ENCODE measurements at regions of chr7 and their contacts with region 1.

Region 1: GRCh38 chr7:129218514-129219062 is 6.2 kb upstream of the AHCYL2 start:
- DNase-seq: peak; percentile 85
- H3K4me3 Mint-ChIP-seq: no peak overlapping the region
- H3K27ac Mint-ChIP-seq: no peak overlapping the region
- H3K4me1 Mint-ChIP-seq: peaks cover 9% of the 10 kb centered on the region
- H3K27me3 Mint-ChIP-seq: peaks cover 3% of the 10 kb centered on the region

Region 2: DNA sequence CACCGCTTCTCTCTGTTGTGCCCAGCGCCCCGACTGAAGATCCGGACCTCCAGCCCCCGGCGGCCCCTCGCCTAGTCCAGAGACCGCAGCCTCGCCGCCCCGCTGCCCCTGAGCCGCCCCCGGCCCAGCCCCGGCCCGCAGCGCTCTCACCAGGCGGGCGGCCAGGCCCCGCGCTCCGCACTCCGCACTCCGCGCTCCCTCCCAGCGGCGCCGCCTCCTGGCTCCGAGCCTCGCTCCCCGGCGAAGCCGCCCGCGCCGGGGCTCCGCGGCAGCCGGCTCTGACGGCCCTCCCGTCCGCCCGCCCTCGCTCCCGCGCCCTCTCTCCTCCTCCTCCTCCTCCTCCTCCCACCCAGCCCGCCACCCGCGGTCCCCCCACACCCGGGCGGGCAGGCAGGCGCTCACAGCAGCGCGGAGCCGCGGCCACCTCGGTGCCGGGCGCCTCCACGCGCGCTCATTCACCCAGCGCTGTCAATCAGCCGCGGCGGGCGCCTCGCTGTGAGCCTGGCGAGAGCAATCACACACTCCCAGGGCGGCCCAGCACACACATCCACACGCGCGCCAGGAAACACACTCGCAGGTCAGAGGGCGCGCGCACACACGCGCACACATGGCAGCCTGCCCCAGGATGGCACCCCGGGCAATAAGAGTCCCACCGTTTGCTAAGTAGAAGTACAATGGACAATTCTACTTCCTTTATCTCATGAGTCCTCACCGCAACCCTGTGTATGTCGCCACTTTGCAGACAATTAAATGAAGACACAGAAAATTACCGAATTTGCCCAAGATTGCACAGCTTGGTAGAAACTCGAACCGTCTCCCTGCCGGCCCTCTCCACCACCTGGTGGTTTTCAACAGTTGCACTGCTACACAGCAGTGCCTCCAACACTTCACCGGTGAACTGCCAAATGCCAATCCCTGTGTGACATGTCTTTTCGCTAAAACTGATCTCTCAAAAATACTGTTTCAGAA is 856.9 kb before region 1 on chr7 and contains the start of gene PRRT4:
- CTCF ChIA-PET with region 1: no interaction called
- POLR2A ChIA-PET with region 1: no interaction called
- intact Hi-C with region 1: no loop called
- DNase-seq: peak; percentile 48
- H3K4me3 Mint-ChIP-seq: peak within 1 kb of the TSS; percentile 69
- H3K27ac Mint-ChIP-seq: no peak within 1 kb of the TSS
- H3K4me1 Mint-ChIP-seq: peaks cover 21% of the 10 kb centered on the region
- H3K27me3 Mint-ChIP-seq: peaks cover 42% of the 10 kb centered on the region
- total RNA-seq, gene PRRT4: 0.10 to 0.12 TPM

Region 3: DNA sequence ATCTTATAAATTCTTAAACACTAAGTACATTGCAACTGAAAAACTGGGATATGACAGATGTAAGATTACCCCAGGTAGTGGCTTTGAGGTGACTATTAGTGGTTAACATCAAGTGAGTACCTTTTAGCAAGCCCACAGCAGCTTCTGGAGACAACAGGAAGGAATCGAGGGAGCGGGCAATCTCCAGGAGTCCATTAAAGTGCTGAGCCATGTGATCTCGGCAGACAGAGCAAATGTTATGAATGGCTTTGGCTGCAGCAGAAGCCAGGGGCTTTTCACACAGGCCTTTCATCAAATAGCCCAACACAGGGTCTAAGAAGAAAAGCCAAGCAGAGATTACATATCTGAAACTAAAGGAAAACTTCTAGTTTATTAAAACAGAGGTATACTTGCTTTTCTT is 232.0 kb before region 1 on chr7:
- CTCF ChIA-PET with region 1: no interaction called
- POLR2A ChIA-PET with region 1: no interaction called
- intact Hi-C with region 1: no loop called
- DNase-seq: no peak
- H3K4me3 Mint-ChIP-seq: no peak overlapping the region
- H3K27ac Mint-ChIP-seq: no peak overlapping the region
- H3K4me1 Mint-ChIP-seq: no peaks in the 10 kb centered on the region
- H3K27me3 Mint-ChIP-seq: no peaks in the 10 kb centered on the region

Region 4: GRCh38 chr7:129163875-129164544 is 54.6 kb before region 1 on chr7:
- CTCF ChIA-PET with region 1: interaction called, 27 read pairs
- POLR2A ChIA-PET with region 1: no interaction called
- intact Hi-C with region 1: no loop called
- DNase-seq: no peak
- H3K4me3 Mint-ChIP-seq: no peak overlapping the region
- H3K27ac Mint-ChIP-seq: no peak overlapping the region
- H3K4me1 Mint-ChIP-seq: peaks cover 7% of the 10 kb centered on the region
- H3K27me3 Mint-ChIP-seq: peaks cover 14% of the 10 kb centered on the region

Region 5: DNA sequence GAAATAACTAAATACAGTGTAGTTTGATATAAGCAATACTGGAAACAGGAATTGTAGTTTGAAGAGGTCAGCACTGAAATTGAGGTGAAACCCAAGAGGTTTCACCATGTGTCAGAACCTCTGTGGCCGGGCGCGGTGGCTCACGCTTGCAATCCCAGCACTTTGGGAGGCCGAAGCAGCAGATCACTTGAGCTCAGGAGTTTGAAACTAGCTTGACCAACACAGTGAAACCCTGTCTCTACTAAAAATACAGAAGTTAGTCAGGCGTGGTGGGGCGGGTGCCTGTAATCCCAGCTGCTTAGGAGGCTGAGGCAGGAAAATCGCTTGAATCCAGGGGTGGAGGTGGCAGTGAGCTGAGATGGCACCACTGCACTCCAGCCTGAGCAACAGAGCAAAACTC is 20.0 kb after region 1 on chr7:
- CTCF ChIA-PET with region 1: interaction called, 47 read pairs
- POLR2A ChIA-PET with region 1: no interaction called
- intact Hi-C with region 1: no loop called
- DNase-seq: no peak
- H3K4me3 Mint-ChIP-seq: no peak overlapping the region
- H3K27ac Mint-ChIP-seq: no peak overlapping the region
- H3K4me1 Mint-ChIP-seq: peaks cover 2% of the 10 kb centered on the region
- H3K27me3 Mint-ChIP-seq: no peaks in the 10 kb centered on the region

Region 6: GRCh38 chr7:129258649-129259389 is 40.2 kb after region 1 on chr7:
- CTCF ChIA-PET with region 1: interaction called, 34 read pairs
- POLR2A ChIA-PET with region 1: no interaction called
- intact Hi-C with region 1: no loop called
- DNase-seq: no peak
- H3K4me3 Mint-ChIP-seq: no peak overlapping the region
- H3K27ac Mint-ChIP-seq: no peak overlapping the region
- H3K4me1 Mint-ChIP-seq: peaks cover 26% of the 10 kb centered on the region
- H3K27me3 Mint-ChIP-seq: no peaks in the 10 kb centered on the region

Region 7: DNA sequence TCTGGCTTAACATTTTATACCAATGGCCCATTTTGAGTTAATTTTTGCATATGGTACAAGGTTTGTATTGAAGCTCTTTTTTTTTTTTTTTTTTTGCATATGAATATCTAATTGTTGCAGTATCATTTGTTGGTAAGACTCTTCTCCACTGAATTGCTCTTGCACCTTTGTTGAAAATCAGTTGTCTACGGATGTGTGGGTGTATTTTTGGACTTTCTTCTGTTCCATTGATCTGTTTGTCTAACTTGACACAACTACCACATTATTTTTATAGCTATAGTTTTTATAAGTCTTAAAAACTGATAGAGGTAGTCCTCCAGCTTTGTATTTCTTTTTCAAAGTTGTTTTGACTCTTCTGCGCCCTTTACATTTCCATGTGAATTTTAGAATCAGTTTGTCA is 60.1 kb after region 1 on chr7:
- CTCF ChIA-PET with region 1: interaction called, 318 read pairs
- POLR2A ChIA-PET with region 1: no interaction called
- intact Hi-C with region 1: no loop called
- DNase-seq: no peak
- H3K4me3 Mint-ChIP-seq: no peak overlapping the region
- H3K27ac Mint-ChIP-seq: no peak overlapping the region
- H3K4me1 Mint-ChIP-seq: peaks cover 4% of the 10 kb centered on the region
- H3K27me3 Mint-ChIP-seq: no peaks in the 10 kb centered on the region

Region 8: GRCh38 chr7:129327076-129327475 is 108.5 kb after region 1 on chr7:
- CTCF ChIA-PET with region 1: no interaction called
- POLR2A ChIA-PET with region 1: no interaction called
- intact Hi-C with region 1: no loop called
- DNase-seq: no peak
- H3K4me3 Mint-ChIP-seq: no peak overlapping the region
- H3K27ac Mint-ChIP-seq: no peak overlapping the region
- H3K4me1 Mint-ChIP-seq: no peaks in the 10 kb centered on the region
- H3K27me3 Mint-ChIP-seq: no peaks in the 10 kb centered on the region

Region 9: DNA sequence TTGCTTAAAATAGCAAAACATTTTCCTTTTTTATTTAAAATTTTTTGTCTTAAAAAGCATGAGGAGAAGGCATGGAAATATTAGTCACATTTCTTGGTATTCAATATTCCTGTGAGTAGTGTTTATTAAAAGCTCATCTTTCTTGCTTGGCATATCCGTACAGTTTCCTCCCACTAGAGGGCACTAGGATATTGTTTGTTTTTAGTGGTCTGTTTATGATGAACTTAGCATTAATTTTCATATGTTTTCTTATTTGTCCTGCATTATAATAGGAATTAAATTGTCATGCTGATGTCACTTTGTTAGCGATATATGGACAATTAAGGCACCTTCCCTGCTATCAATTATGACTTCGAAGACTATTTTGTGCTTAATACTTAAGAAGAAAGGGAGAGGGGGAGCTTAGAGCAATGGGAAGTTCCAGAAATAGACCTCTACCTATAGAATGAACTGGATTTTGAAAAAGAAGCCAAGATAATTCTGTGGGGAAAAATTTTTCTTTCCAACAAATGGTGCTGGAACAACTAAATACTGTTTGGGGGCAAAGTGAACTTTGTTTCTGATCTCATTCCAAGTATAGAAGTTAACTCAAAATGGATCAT is 124.6 kb after region 1 on chr7:
- CTCF ChIA-PET with region 1: interaction called, 17 read pairs
- POLR2A ChIA-PET with region 1: no interaction called
- intact Hi-C with region 1: no loop called
- DNase-seq: no peak
- H3K4me3 Mint-ChIP-seq: no peak overlapping the region
- H3K27ac Mint-ChIP-seq: no peak overlapping the region
- H3K4me1 Mint-ChIP-seq: peaks cover 30% of the 10 kb centered on the region
- H3K27me3 Mint-ChIP-seq: no peaks in the 10 kb centered on the region

Region 10: GRCh38 chr7:129644634-129645230 is 426.1 kb after region 1 on chr7:
- CTCF ChIA-PET with region 1: interaction called, 15 read pairs
- POLR2A ChIA-PET with region 1: no interaction called
- intact Hi-C with region 1: no loop called
- DNase-seq: no peak
- H3K4me3 Mint-ChIP-seq: no peak overlapping the region
- H3K27ac Mint-ChIP-seq: no peak overlapping the region
- H3K4me1 Mint-ChIP-seq: peaks cover 17% of the 10 kb centered on the region
- H3K27me3 Mint-ChIP-seq: no peaks in the 10 kb centered on the region